ENCODE measurements at regions of chr13 and their contacts with region 1.

Region 1: DNA sequence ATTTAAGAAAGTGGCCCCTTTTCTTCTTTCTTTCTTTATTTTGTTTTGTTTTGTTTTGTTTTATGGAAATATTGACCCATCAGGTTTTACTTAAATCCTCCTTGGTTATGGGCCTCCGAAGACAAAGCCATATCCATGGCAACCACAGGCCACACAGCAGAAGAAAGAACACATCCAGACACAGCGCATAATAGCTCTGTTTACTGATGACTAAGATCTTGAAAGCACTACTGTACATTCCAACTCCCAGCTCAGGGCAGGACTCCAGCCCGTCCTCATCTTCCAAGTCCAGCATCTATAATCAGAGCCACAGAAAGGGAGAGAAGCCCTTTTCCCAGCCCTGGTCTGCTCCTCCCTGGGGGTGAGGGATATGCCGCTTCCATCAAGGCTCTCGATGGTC is 84.3 kb downstream of the NUFIP1 start:
- DNase-seq: no peak
- H3K4me3 ChIP-seq: no peak overlapping the region
- H3K27ac ChIP-seq: peak overlapping the region; percentile 81
- H3K4me1 ChIP-seq: peaks cover 43% of the 10 kb centered on the region
- H3K27me3 ChIP-seq: no peaks in the 10 kb centered on the region
- CTCF ChIP-seq: no peak
- POLR2A ChIP-seq: no peak

Region 2: DNA sequence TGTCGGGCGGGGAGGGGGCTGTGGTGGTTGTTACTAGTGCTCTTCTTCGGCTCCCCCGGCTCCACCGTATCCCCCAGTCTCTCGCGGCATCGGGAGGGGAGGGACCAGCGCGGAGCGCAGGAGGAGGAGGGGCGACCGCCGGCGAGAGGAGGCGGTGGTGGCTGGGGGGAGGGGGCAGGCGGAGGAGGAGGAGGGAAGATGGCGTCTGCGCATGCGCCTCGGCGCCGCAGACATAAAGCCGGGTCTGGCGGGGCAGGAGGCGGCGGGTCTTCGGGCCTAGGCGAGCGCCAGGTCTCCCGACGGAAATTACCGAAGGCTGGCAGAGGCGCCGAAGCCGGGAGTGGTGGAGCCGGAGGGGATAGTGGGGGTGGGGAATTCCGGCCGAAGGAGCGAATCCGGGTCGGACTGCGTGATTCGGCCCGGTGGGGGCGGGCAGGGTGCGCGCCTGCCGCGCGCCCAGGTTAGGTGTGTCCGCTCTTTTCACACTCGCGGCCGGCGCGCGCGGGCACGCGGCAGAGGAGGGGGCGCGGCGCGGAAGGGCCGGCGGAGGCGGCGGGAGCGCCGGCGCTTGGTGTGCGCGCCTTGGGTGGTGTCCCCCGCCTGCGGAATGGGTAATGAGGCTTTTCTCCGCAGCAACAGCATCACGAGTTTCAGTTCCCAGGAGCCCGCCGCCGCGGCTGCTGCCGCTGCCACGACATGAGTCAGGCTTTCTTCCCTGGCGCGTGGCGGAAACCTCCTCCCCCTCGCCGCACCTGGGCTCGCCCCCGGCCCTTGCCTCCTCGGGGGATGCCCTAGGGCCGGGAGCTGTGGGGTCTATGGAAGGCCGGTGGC is 327.5 kb before region 1 on chr13:
- intact Hi-C with region 1: loop called (anchors 5 kb)
- DNase-seq: peak in 1 of 2 donors; percentile 96
- H3K4me3 ChIP-seq: peak overlapping the region; percentile 90
- H3K27ac ChIP-seq: peak overlapping the region; percentile 98
- H3K4me1 ChIP-seq: peaks cover 46% of the 10 kb centered on the region
- H3K27me3 ChIP-seq: no peaks in the 10 kb centered on the region
- CTCF ChIP-seq: no peak
- POLR2A ChIP-seq: peak in 1 of 2 donors; percentile 52

Region 3: GRCh38 chr13:44884076-44884729 is 20.8 kb before region 1 on chr13:
- intact Hi-C with region 1: no loop called
- DNase-seq: no peak
- H3K4me3 ChIP-seq: no peak overlapping the region
- H3K27ac ChIP-seq: no peak overlapping the region
- H3K4me1 ChIP-seq: no peaks in the 10 kb centered on the region
- H3K27me3 ChIP-seq: no peaks in the 10 kb centered on the region
- CTCF ChIP-seq: no peak
- POLR2A ChIP-seq: no peak

Region 4: DNA sequence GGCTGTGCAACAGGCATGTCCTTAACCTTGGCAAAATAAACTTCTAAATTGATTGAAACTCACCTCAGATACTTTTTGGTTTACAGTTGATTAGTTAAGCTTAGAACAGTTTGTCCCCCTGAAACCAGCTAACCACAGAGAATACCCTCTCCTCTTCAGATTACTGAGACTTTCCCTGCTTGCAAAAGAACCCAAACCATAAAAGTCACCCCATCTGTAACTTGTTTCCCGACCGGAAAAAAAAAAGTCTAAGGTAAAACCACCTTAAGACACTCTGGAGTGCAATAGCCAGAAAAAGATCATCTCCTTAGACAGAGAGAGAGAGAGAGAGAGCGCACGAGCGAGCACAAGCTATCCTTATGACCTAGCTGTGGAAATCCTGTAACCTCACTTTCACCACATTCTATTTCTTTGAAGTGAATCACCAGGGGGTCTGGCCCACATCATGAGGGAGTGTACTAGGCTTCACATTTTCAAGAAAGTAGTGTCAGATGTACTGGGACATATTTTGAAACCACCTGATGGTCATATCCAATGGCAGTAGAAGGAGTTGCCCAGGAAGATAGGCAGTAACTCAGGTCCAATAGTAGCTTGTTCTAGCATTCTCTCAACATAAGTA is 204.2 kb after region 1 on chr13:
- intact Hi-C with region 1: no loop called
- DNase-seq: no peak
- H3K4me3 ChIP-seq: no peak overlapping the region
- H3K27ac ChIP-seq: no peak overlapping the region
- H3K4me1 ChIP-seq: no peaks in the 10 kb centered on the region
- H3K27me3 ChIP-seq: no peaks in the 10 kb centered on the region
- CTCF ChIP-seq: no peak
- POLR2A ChIP-seq: no peak